GM23248 (cell line): ENCODE measurements at regions of chr9 and their contacts with region 1.

Region 1: DNA sequence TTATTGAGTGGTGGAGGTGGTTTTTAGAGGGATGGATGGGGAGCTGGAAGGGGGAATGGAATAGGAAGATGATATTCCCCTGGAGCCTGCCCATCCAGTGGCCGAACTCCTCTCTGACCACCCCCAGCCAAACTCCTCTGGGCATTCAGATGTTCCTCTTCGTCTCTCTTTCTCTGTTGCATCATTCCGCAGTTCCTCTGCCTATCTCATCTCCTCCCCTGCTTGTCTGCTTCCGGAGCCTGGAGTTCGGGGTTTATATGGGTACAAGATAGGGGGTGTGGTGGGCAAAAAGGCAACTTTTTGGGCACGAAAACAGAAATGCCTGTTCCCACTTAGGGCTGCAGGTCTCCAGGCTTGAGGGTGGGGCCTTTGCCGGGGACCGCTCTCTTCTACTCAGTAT is 12.2 kb upstream of the CDK5RAP2 start:
- DNase-seq: no peak
- H3K4me3 ChIP-seq: no peak overlapping the region
- H3K27ac ChIP-seq: no peak overlapping the region
- H3K4me1 ChIP-seq: no peaks in the 10 kb centered on the region
- H3K27me3 ChIP-seq: no peaks in the 10 kb centered on the region

Region 2: GRCh38 chr9:120531683-120532300 is 60.4 kb before region 1 on chr9:
- in situ Hi-C with region 1: loop called (anchors 10 kb)
- DNase-seq: peak; percentile 57
- H3K4me3 ChIP-seq: no peak overlapping the region
- H3K27ac ChIP-seq: peak overlapping the region; percentile 21; the same call in 1 of the 2 replicates
- H3K4me1 ChIP-seq: peaks cover 10% of the 10 kb centered on the region
- H3K27me3 ChIP-seq: no peaks in the 10 kb centered on the region

Region 3: DNA sequence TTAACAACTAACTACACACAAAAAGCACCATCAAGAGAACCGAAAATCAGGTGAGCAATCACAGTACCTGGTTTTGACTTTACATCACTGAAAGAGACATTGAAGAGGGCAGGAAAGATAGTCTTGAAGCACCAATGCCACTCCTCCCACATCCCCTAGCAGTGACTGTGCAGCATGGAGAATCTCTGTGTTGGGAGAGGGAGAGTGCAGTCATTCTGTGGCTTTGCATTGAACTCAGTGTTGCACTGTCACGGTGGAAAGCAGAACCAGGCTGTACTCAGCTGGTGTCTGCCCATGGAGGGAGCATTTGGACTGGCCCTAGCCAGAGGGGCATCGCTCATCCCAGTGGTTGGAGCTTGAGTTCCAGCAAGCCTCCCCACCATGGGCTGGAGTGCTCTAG is 417.4 kb after region 1 on chr9:
- in situ Hi-C with region 1: no loop called
- DNase-seq: no peak
- H3K4me3 ChIP-seq: no peak overlapping the region
- H3K27ac ChIP-seq: no peak overlapping the region
- H3K4me1 ChIP-seq: no peaks in the 10 kb centered on the region
- H3K27me3 ChIP-seq: no peaks in the 10 kb centered on the region